Posterior vena cava (tissue), 2 donors: ENCODE measurements at regions of chr6 and their contacts with region 1.

Region 1: DNA sequence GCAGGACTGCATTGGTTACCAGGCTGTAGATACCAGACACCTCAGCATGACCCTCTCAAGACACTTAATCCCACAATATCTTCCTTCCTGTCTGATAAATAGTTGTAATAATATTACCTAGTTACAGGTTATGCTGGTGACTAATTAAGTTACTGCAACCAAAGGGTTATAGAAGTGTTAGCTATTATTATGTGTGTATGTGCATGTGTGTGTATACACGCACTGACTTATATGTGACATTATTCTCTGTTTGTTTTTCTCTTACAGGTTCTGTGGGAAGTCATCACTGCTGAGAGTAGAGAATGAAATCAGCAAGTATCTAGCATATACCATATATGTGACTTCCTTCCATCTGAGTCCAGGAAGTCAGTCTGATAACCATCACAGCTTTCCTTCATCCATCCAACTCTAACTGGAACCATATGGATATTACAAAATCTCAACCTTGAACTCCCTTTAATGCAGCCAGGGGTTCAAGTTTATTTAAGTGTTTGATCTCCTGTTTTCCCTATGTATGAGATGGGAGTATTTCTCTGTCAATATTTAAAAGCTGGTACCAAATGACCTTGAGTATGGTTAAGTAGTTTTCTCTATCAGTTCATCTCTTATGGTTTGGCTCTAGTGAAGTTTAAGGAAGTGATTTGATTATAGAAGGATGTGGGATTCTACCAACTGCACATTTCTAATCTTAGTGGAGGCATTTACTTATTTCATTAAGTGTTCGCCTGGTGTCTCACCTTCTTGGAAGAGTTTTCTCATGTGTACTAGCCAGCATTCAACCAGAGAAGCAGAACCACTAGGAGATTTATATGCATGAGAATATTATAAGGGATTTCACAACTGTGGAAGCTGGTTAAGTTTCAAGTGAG is 313.2 kb downstream of the HIVEP2 start:
- DNase-seq: no peak

Region 2: DNA sequence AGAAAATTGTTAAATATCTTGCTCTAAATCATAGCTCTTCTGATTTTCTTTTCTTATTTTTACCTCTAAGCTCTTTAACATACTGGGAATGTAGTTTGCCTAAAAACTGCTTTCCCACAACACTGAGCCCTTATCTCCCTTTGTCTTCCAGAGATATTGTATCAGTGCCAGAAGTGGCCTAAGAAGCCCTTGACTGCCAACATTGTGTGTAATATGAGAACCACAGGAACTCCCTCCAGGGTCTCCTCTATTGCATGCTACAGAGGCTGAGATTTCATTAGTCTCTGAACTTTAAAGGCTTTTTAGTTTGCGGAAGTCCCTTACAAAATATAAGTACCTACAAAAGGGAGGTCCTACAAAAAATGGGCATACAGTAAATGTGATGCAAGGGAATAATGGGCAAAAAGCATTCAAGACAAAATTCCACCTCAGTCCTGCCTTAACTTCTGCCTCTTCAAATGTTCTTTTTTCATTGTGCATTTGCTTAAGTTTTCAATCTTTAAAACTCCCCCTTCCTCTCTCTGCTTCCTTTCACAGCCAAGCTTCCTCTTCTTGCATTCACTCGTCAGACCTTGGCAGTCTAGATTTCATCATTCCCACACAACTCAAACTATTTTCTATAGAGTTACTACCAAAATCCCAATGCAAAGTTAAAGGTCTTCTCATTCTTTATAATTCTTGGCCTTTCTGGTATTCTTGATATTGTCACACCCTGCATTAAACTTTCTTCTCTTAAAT is 253.4 kb before region 1 on chr6:
- intact Hi-C with region 1: no loop called
- DNase-seq: no peak

Region 3: GRCh38 chr6:142592876-142593275 is 38.9 kb before region 1 on chr6:
- intact Hi-C with region 1: no loop called
- DNase-seq: no peak

Region 4: DNA sequence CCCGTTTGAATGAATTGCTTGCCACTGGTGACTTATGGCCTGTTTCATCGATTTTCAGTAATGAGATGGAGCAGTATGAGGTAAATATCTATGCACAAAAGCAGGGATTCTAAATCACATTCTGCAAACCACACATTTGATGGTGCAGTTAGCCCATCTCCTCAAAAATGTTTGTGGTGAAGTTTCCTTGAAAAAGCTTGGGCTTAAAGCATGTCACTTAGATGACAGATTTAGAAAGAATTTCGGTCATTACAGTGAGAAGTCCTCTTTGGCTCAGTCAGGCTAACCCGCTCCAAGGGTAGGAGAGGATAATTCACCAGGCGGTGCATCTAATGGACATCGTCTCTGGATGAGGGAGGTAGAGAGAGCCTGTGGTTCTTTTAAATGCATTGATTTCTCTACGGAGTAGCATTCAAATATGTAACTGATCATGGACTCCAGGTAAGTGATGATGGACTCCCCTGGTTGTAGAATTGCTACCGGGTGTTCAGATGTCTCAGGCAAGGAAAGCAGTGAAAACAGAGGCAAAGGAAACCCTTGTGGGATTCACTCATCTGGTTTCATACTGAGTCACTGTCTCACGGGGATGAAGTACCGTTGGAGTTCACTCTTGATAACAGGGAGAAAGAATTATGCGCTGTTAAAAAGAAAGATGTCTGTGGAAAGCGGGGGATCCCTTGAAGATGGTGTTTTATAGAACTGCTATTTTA is 494.3 kb after region 1 on chr6:
- intact Hi-C with region 1: no loop called
- DNase-seq: no peak

Region 5: GRCh38 chr6:144033816-144034735 is 1402.3 kb after region 1 on chr6:
- intact Hi-C with region 1: no loop called
- DNase-seq: no peak

Region 6: GRCh38 chr6:144149891-144150709 is 1518.3 kb after region 1 on chr6 and contains the start of gene STX11:
- intact Hi-C with region 1: loop called in 1 of 2 experiments (anchors 5 kb)
- DNase-seq: peak; percentile 93
- total RNA-seq, gene STX11: 7.0 to 10.5 TPM